ENCODE measurements at regions of chr11 and their contacts with region 1.

Region 1: GRCh38 chr11:9015677-9016076 is 11.9 kb upstream of the NRIP3 start:
- DNase-seq: peak; percentile 72
- ATAC-seq: peak; percentile 97
- H3K4me3 Mint-ChIP-seq: no peak overlapping the region
- H3K27ac Mint-ChIP-seq: no peak overlapping the region
- H3K4me1 Mint-ChIP-seq: peaks cover 11% of the 10 kb centered on the region
- H3K27me3 Mint-ChIP-seq: no peaks in the 10 kb centered on the region
- CTCF ChIP-seq: peak; percentile 67

Region 2: GRCh38 chr11:8682303-8683114 is 333.2 kb before region 1 on chr11 and contains the starts of genes RPL27A and TRIM66:
- CTCF ChIA-PET with region 1: no interaction called
- POLR2A ChIA-PET with region 1: no interaction called
- intact Hi-C with region 1: no loop called
- DNase-seq: peak; percentile 99
- ATAC-seq: peak; percentile 96
- H3K4me3 Mint-ChIP-seq: peak within 1 kb of the TSS; percentile 93
- H3K27ac Mint-ChIP-seq: peak within 1 kb of the TSS; percentile 97
- H3K4me1 Mint-ChIP-seq: peaks cover 41% of the 10 kb centered on the region
- H3K27me3 Mint-ChIP-seq: no peaks in the 10 kb centered on the region
- CTCF ChIP-seq: no peak
- total RNA-seq, gene RPL27A: 959 to 987 TPM
- total RNA-seq, gene TRIM66: 24.7 to 28.4 TPM

Region 3: DNA sequence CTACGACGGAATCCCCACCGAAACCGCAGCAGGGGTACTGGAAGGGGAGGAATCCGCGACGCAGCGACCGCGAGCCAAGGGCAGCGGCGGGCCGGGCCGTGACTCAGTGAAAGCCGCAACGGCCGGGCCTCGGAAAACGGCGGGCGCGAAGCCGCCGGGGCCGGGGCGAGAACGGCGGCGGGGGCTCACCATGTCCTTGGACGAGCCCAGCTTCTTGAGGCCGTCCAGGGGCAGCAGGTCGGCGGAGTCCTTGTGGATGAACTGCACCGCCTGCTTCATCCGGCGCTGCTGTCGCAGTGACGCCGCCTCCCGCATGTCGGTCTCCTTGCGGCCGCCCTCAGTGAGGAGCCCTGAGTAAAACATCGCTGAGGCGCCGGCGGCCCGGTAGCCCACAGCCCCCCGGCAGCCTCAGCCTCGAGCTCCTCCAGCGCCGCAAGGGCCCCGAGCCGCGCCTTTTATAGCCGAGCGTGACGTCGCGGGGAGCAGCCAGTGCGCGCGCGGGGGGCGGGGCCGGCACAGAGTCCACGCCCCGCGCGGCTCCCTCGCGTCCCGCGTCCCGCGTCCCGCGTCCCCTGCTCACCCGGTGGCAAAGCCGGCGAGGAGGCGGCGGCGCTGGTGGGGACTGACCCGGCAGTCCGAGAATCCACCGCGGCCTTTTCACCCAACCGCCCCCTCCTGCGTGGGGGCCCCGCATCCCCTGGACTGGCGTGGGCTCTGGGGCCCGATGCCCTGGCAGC is 11.9 kb before region 1 on chr11 and contains the start of gene NRIP3:
- CTCF ChIA-PET with region 1: interaction called, 31 read pairs
- POLR2A ChIA-PET with region 1: no interaction called
- intact Hi-C with region 1: no loop called
- DNase-seq: peak; percentile 74
- ATAC-seq: peak; percentile 52
- H3K4me3 Mint-ChIP-seq: peak within 1 kb of the TSS; percentile 69
- H3K27ac Mint-ChIP-seq: peak within 1 kb of the TSS; percentile 58
- H3K4me1 Mint-ChIP-seq: peaks cover 26% of the 10 kb centered on the region
- H3K27me3 Mint-ChIP-seq: peaks cover 34% of the 10 kb centered on the region
- CTCF ChIP-seq: no peak
- total RNA-seq, gene NRIP3: 1.1 to 2.2 TPM

Region 4: GRCh38 chr11:9030601-9031000 is 14.9 kb after region 1 on chr11:
- CTCF ChIA-PET with region 1: interaction called, 55 read pairs
- POLR2A ChIA-PET with region 1: no interaction called
- intact Hi-C with region 1: no loop called
- DNase-seq: no peak
- ATAC-seq: no peak
- H3K4me3 Mint-ChIP-seq: no peak overlapping the region
- H3K27ac Mint-ChIP-seq: no peak overlapping the region
- H3K4me1 Mint-ChIP-seq: no peaks in the 10 kb centered on the region
- H3K27me3 Mint-ChIP-seq: no peaks in the 10 kb centered on the region
- CTCF ChIP-seq: no peak

Region 5: DNA sequence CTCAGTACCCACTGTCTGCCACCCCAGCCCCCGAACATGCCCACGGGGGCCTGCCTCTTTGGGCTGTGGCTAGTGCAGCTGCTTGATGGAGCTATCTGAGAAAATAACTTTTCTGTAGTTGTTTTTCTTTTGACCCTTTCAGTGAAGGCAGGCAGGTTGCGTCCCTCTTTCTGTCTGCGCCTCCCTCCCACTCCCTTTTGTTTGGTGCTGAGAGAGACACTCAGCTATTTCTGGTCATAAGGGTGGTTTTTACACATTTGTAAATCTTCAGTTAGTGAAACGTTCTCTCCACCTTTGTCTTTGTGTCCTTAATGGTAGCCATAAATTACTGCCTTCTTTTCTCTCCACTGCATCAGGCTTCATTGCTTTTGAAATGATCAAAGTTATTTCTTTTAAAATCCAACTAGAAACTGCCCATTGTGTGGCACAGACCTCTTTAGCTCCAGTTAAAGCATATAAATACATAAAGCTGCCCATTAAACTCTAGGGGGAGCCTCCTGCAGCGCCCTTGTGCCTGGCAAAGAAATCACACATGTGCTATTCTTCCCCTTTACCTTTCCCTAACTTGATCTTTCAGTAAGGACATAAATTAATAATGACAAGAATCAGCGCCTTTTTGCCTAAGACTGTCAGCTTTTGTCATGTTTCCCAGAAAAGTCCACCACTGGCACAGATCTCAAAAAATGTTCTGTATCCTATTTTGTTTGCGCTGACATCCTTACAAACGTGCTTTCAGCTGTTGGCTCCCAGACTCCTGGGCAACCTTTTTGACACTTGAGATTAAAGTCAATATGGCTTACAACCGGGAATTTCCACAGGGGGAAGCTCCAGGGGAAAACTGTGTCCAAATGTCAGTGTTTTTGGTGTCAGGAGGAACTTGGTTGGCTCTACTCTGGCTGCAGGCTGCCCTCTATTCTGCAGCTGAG is 77.4 kb after region 1 on chr11:
- CTCF ChIA-PET with region 1: interaction called, 15 read pairs
- POLR2A ChIA-PET with region 1: no interaction called
- intact Hi-C with region 1: no loop called
- DNase-seq: no peak
- ATAC-seq: no peak
- H3K4me3 Mint-ChIP-seq: no peak overlapping the region
- H3K27ac Mint-ChIP-seq: no peak overlapping the region
- H3K4me1 Mint-ChIP-seq: no peaks in the 10 kb centered on the region
- H3K27me3 Mint-ChIP-seq: peaks cover 49% of the 10 kb centered on the region
- CTCF ChIP-seq: no peak

Region 6: DNA sequence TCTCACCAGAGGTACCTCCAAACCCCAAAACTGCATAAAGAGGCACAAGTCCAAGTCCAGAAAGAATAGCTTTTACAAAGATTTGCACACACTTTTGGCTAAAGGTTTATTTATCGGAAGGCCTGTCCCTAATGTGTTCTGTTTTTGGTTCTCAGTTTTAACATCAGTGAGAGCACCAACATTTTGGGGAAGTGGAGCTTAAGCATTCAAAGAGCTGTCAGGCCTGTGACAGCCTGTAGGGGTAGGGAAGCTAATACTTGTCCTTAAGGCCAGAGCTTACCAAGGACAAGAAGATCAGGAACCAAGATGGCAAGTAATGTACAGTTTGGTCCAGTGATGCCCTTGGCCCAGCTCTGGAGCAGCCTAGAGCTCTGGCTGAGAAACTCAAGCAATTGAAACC is 114.6 kb after region 1 on chr11:
- CTCF ChIA-PET with region 1: interaction called, 13 read pairs
- POLR2A ChIA-PET with region 1: no interaction called
- intact Hi-C with region 1: no loop called
- DNase-seq: no peak
- ATAC-seq: no peak
- H3K4me3 Mint-ChIP-seq: no peak overlapping the region
- H3K27ac Mint-ChIP-seq: no peak overlapping the region
- H3K4me1 Mint-ChIP-seq: peaks cover 5% of the 10 kb centered on the region
- H3K27me3 Mint-ChIP-seq: no peaks in the 10 kb centered on the region
- CTCF ChIP-seq: no peak

Region 7: DNA sequence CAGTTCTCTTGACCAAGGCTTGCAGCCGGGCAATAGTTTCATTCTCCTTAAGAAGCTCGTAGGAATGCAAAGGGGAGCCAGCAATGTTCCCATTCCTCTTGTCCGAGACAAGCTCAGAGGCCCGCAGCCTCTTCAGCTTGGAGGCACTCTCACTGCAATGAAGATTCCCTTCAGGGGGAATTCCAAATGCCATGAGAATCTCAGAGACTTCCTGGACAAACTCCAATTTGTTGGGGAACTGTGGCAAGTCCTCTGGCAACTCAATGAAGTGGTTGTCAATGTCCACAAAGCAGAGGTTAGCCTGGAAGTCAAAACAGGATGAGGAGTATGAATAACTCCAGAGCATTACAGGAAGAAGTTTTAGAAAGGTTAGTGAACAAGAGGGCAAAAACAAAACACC is 165.1 kb after region 1 on chr11:
- CTCF ChIA-PET with region 1: no interaction called
- POLR2A ChIA-PET with region 1: no interaction called
- intact Hi-C with region 1: no loop called
- DNase-seq: no peak
- ATAC-seq: no peak
- H3K4me3 Mint-ChIP-seq: no peak overlapping the region
- H3K27ac Mint-ChIP-seq: no peak overlapping the region
- H3K4me1 Mint-ChIP-seq: peaks cover 8% of the 10 kb centered on the region
- H3K27me3 Mint-ChIP-seq: no peaks in the 10 kb centered on the region
- CTCF ChIP-seq: no peak

Region 8: DNA sequence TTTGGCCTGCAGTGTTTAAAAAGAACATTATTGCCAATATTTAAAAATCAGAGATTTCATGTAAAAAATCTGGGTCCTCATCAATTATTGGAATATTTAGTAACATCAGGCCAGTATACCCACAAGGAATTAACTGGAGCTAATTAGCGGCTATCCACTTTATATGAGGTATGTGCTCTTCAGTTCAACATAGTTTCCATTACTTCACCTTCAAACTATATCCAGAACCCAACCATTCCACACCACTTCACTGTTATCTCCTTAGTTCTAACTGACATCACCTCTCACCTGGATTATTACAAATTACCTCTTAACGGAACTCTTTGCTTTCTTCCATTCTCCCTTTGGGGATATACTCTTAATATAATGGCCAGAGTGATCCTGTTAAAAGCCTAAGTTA is 184.8 kb after region 1 on chr11:
- CTCF ChIA-PET with region 1: no interaction called
- POLR2A ChIA-PET with region 1: no interaction called
- intact Hi-C with region 1: no loop called
- DNase-seq: no peak
- ATAC-seq: no peak
- H3K4me3 Mint-ChIP-seq: no peak overlapping the region
- H3K27ac Mint-ChIP-seq: no peak overlapping the region
- H3K4me1 Mint-ChIP-seq: peaks cover 35% of the 10 kb centered on the region
- H3K27me3 Mint-ChIP-seq: no peaks in the 10 kb centered on the region
- CTCF ChIP-seq: no peak